CD4-positive, alpha-beta memory T cell (primary cell): ENCODE measurements at regions of chr14 and their contacts with region 1.

Region 1: DNA sequence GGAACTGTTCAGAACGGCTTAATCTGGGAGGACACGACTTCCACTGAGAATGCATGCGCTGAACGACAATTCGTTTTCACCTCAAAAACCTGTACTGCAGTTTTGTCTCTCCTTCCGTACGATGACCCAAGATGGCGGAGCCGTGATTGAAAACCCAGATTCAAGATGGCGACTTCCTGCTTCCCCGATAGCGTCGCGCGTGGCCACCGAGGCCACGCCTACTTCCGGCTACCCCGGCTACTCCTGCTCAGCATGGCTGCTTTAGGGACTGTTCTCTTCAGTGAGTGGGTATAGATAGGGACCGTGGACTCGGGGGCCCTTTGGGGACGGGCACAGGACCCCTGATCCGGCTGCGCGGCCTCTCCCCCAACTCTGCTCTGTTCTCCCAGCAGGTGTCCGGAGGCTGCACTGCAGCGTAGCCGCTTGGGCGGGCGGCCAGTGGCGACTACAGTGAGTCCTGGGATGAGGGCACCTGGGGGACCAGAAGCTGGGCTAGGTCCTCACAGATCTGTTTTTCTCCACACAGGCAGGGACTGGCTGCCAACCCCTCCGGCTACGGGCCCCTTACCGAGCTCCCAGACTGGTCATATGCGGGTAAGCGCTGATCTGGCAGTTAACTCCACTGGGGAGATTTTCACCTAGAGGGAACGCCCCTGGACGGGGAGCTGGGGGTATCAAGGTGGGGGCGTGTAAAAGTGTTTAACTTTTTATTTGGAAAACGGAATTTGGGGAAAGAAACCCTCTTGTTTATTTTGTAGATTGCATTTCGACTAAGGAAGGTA is at the start of gene MRPL52:
- DNase-seq: peak; percentile 86 to 93 (median 88)
- H3K4me3 ChIP-seq: peak within 1 kb of the TSS; percentile 80 to 85
- H3K4me3 Mint-ChIP-seq: peak within 1 kb of the TSS; percentile 91 to 96 (median 92)
- H3K27ac ChIP-seq: peak within 1 kb of the TSS; percentile 85
- H3K27ac Mint-ChIP-seq: peak within 1 kb of the TSS; percentile 96 to 99 (median 98)
- H3K4me1 ChIP-seq: peaks cover 18% of the 10 kb centered on the region
- H3K4me1 Mint-ChIP-seq: peaks cover 17 to 32% (median 24%) of the 10 kb centered on the region in 4 donors
- H3K27me3 ChIP-seq: no peaks in the 10 kb centered on the region
- H3K27me3 Mint-ChIP-seq: peaks cover 0 to 1% of the 10 kb centered on the region in 2 donors
- total RNA-seq, gene MRPL52: 58.0 to 68.3 TPM

Region 2: GRCh38 chr14:22811722-22812121 is 18.1 kb before region 1 on chr14:
- CTCF ChIA-PET with region 1: no interaction called
- POLR2A ChIA-PET with region 1: no interaction called
- intact Hi-C with region 1: no loop called
- DNase-seq: no peak
- H3K4me3 ChIP-seq: no peak overlapping the region
- H3K4me3 Mint-ChIP-seq: no peak overlapping the region
- H3K27ac ChIP-seq: no peak overlapping the region
- H3K27ac Mint-ChIP-seq: no peak overlapping the region
- H3K4me1 ChIP-seq: no peaks in the 10 kb centered on the region
- H3K4me1 Mint-ChIP-seq: peaks cover 0 to 12% (median 3%) of the 10 kb centered on the region in 4 donors
- H3K27me3 ChIP-seq: no peaks in the 10 kb centered on the region
- H3K27me3 Mint-ChIP-seq: peaks cover 1 to 3% of the 10 kb centered on the region in 2 donors

Region 3: DNA sequence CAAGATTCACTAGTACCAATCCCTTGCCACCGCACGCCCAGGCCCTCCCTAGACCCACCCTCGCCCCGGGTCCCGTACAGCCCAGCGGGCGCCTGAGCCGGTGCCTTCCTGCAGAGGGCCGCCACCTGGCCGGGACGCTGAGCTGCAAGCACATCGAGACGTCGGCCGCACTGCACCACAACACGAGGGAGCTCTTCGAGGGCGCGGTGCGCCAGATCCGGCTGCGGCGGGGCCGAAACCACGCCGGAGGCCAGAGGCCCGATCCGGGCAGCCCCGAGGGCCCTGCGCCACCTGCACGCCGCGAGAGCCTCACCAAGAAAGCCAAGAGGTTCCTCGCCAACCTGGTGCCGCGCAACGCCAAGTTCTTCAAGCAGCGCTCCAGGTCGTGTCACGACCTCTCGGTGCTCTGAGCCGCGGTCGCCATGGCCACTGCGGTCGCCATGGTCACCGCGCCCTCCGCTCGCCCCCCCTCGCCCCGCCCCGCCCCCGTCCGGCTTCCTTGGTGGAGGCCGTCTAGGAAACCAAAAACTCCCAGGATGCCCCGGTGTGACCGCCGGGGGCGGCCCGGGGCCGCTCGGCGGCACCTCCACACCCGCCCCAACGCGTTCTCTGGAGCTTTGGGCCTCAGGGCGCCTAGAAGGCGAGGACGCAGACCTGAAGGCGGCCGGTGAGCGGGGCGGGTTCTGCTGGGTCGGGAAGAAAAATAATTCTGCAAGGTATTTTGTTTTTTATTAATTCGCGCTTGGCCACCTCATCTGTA is 56.8 kb after region 1 on chr14:
- CTCF ChIA-PET with region 1: interaction called, 16 read pairs
- POLR2A ChIA-PET with region 1: interaction called, 9 read pairs
- intact Hi-C with region 1: loop called (anchors 1 kb)
- DNase-seq: peak; percentile 73 to 85 (median 78)
- H3K4me3 ChIP-seq: peak overlapping the region; percentile 24 to 30
- H3K4me3 Mint-ChIP-seq: peak overlapping the region; percentile 87 to 97 (median 94)
- H3K27ac ChIP-seq: peak overlapping the region; percentile 68
- H3K27ac Mint-ChIP-seq: peak overlapping the region; percentile 93 to 99 (median 97)
- H3K4me1 ChIP-seq: peaks cover 57% of the 10 kb centered on the region
- H3K4me1 Mint-ChIP-seq: peaks cover 34 to 85% (median 59%) of the 10 kb centered on the region in 4 donors
- H3K27me3 ChIP-seq: no peaks in the 10 kb centered on the region
- H3K27me3 Mint-ChIP-seq: no peaks in the 10 kb centered on the region

Region 4: DNA sequence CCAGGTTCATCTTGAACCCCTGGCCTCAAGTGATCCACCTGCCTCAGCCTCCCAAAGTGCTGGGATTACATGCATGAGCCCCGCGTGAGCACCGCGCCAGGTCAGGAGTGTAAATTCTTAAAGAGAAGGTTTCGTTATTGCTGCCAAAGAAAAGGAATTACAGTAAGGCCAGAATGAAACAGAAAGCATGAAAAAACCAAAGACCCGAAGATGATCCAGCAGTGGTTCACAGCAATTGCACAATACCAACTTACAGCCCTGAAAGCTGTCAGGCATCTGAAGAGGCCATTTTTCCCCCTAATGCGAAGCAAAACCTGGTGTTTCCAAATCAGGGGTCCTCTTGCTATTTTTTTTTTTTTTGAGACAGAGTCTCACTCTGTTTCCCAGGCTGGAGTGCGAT is 78.7 kb after region 1 on chr14:
- CTCF ChIA-PET with region 1: no interaction called
- POLR2A ChIA-PET with region 1: no interaction called
- intact Hi-C with region 1: no loop called
- DNase-seq: no peak
- H3K4me3 ChIP-seq: no peak overlapping the region
- H3K4me3 Mint-ChIP-seq: no peak overlapping the region
- H3K27ac ChIP-seq: no peak overlapping the region
- H3K27ac Mint-ChIP-seq: peak overlapping the region in 2 of 7 donors; percentile 42 to 75
- H3K4me1 ChIP-seq: peaks cover 10% of the 10 kb centered on the region
- H3K4me1 Mint-ChIP-seq: peaks cover 10 to 21% (median 17%) of the 10 kb centered on the region in 4 donors
- H3K27me3 ChIP-seq: no peaks in the 10 kb centered on the region
- H3K27me3 Mint-ChIP-seq: no peaks in the 10 kb centered on the region

Region 5: DNA sequence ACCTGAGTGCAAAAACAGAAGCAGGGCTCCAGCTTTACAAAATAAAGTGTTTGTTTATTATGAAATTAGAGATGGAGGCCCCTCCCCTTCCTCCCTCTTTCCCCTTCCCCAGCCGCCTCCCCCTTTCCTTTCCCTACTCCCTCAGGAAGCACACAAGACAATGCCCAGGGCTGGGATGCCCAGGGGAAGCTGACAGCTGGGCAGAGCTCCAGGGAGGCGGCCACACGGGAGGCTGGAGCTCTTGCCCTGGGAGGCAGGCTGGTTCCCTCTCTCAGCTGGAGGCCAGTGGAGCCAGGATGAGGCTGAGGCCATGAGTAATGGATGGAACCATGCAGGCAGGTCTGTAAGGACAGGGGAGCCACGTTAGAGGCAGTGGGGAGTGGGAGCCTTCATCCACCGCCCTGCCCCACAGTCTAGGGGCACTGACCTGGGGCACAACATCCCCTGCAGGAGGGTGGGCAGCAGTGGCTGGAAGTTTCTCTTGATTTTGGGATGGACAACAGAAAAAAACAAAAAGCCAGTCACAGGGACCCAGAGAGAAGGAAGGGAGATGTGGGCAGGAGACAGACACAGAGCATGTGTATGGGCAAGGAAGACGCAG is 217.3 kb after region 1 on chr14:
- CTCF ChIA-PET with region 1: no interaction called
- POLR2A ChIA-PET with region 1: no interaction called
- intact Hi-C with region 1: no loop called
- DNase-seq: no peak
- H3K4me3 ChIP-seq: no peak overlapping the region
- H3K4me3 Mint-ChIP-seq: no peak overlapping the region
- H3K27ac ChIP-seq: no peak overlapping the region
- H3K27ac Mint-ChIP-seq: no peak overlapping the region
- H3K4me1 ChIP-seq: no peaks in the 10 kb centered on the region
- H3K4me1 Mint-ChIP-seq: no peaks in the 10 kb centered on the region
- H3K27me3 ChIP-seq: no peaks in the 10 kb centered on the region
- H3K27me3 Mint-ChIP-seq: no peaks in the 10 kb centered on the region

Region 6: DNA sequence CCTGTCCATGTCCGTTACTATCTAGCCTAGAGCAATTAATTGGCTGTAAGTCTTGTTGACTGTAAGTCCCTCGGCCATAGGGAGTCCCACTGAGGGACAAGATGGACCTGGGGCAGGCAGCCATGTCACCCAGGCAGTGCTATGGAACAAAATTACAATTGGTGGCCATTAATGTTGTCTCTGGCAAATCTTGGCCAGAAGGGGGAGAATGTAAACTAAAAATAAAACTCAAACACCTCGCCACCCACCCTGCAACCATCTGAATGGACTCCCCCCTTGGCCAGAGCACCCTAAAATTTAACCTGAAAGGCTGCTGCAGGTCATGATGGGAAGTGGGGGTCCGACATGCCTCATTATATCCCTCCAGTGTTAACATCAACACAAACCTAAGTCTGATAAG is 514.6 kb after region 1 on chr14:
- CTCF ChIA-PET with region 1: no interaction called
- POLR2A ChIA-PET with region 1: no interaction called
- intact Hi-C with region 1: no loop called
- DNase-seq: no peak
- H3K4me3 ChIP-seq: no peak overlapping the region
- H3K4me3 Mint-ChIP-seq: no peak overlapping the region
- H3K27ac ChIP-seq: no peak overlapping the region
- H3K27ac Mint-ChIP-seq: no peak overlapping the region
- H3K4me1 ChIP-seq: no peaks in the 10 kb centered on the region
- H3K4me1 Mint-ChIP-seq: no peaks in the 10 kb centered on the region
- H3K27me3 ChIP-seq: no peaks in the 10 kb centered on the region
- H3K27me3 Mint-ChIP-seq: peaks cover 3 to 7% of the 10 kb centered on the region in 2 donors